ENCODE measurements at regions of chr2 and their contacts with region 1.

Region 1: DNA sequence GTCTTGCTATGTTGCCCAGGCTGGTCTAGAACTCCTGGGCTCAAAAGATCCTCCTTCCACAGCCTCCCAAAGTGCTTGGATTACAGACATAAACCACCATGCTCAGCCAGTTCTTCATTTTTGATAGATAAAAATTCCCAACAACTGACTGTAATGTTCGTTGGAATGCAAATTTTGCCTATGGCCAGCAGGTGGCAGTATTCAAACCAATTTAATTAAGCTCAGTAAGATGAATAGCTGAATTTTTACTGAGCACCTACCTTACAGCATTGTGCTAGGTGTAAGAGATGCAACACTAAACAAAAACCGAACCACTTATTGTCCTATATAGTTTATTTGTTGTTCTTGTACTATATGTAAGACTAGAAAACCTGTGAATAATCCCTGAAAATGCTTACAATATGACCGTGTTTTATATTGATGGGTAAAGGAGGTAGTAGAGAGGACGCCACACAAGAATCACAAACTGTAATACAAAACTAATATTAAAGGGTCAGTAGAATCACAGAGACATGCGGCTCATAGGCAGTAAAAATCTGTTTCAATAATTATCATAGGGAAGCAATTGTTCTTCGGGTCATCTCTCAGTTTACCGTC is 8.2 kb upstream of the TMEM182 start:
- DNase-seq: peak in 1 of 2 donors; percentile 43
- H3K4me3 ChIP-seq: no peak overlapping the region
- H3K27ac ChIP-seq: no peak overlapping the region
- H3K4me1 ChIP-seq: peaks cover 0 to 10% (median 4%) of the 10 kb centered on the region in 4 donors
- H3K27me3 ChIP-seq: no peaks in the 10 kb centered on the region
- CTCF ChIP-seq: peak; percentile 65 to 78

Region 2: GRCh38 chr2:101623031-101623521 is 1130.6 kb before region 1 on chr2:
- intact Hi-C with region 1: no loop called
- DNase-seq: no peak
- H3K4me3 ChIP-seq: no peak overlapping the region
- H3K27ac ChIP-seq: no peak overlapping the region
- H3K4me1 ChIP-seq: peaks cover 0 to 9% (median 2%) of the 10 kb centered on the region in 4 donors
- H3K27me3 ChIP-seq: no peaks in the 10 kb centered on the region
- CTCF ChIP-seq: no peak

Region 3: GRCh38 chr2:102615622-102616436 is 137.8 kb before region 1 on chr2:
- intact Hi-C with region 1: no loop called
- DNase-seq: peak in 1 of 2 donors; percentile 38
- H3K4me3 ChIP-seq: no peak overlapping the region
- H3K27ac ChIP-seq: no peak overlapping the region
- H3K4me1 ChIP-seq: peaks cover 0 to 18% (median 13%) of the 10 kb centered on the region in 4 donors
- H3K27me3 ChIP-seq: peaks cover 0 to 22% of the 10 kb centered on the region in 2 donors
- CTCF ChIP-seq: peak; percentile 43 to 56

Region 4: DNA sequence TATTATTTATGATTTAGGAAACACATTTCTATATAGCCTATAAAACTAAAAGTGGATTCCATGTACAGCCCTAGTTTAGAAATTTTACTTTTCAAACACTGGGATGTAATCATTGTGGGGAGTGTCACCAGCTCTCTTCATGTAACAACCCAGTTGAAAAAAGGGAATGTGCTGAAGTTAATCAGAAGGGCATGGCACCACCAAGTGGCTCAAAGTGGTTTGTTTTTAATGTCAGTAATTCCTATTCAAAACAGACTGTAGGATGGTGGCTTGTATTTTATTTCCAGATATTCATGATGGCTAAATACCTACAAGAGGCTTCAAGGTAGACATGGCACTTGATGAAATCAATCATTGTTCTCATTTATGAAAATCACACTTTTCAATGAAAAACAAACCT is 49.9 kb before region 1 on chr2:
- intact Hi-C with region 1: no loop called
- DNase-seq: no peak
- H3K4me3 ChIP-seq: no peak overlapping the region
- H3K27ac ChIP-seq: no peak overlapping the region
- H3K4me1 ChIP-seq: no peaks in the 10 kb centered on the region
- H3K27me3 ChIP-seq: peaks cover 0 to 4% of the 10 kb centered on the region in 2 donors
- CTCF ChIP-seq: no peak

Region 5: GRCh38 chr2:102801098-102801718 is 47.5 kb after region 1 on chr2:
- intact Hi-C with region 1: loop called (anchors 5 kb)
- DNase-seq: no peak
- H3K4me3 ChIP-seq: no peak overlapping the region
- H3K27ac ChIP-seq: no peak overlapping the region
- H3K4me1 ChIP-seq: no peaks in the 10 kb centered on the region
- H3K27me3 ChIP-seq: no peaks in the 10 kb centered on the region
- CTCF ChIP-seq: no peak